Right cardiac atrium (tissue), 5 donors: ENCODE measurements at regions of chr7 and their contacts with region 1.

Region 1: DNA sequence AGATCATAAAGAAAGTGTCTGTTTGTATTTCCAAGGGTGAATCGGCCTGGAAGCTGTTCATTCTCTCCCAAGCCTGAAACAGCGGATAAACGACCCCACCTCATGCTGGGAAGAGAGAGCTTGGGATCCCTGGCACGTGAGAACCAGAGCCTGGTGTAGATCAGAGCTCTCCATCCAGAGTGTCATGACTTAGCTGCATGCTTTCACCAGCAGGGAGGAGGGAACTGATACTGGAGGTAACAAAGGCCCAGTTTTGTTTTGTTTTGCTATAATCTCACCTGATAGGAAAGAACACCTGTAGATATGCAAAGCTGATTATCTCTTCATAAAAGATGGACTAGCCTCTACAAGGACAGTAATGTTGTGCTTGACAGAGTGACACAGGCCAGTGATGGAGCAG is 236.6 kb downstream of the POM121L12 start:
- DNase-seq: no peak
- ATAC-seq: no peak
- H3K4me3 ChIP-seq: no peak overlapping the region
- H3K27ac ChIP-seq: no peak overlapping the region
- H3K4me1 ChIP-seq: no peaks in the 10 kb centered on the region
- H3K27me3 ChIP-seq: no peaks in the 10 kb centered on the region

Region 2: DNA sequence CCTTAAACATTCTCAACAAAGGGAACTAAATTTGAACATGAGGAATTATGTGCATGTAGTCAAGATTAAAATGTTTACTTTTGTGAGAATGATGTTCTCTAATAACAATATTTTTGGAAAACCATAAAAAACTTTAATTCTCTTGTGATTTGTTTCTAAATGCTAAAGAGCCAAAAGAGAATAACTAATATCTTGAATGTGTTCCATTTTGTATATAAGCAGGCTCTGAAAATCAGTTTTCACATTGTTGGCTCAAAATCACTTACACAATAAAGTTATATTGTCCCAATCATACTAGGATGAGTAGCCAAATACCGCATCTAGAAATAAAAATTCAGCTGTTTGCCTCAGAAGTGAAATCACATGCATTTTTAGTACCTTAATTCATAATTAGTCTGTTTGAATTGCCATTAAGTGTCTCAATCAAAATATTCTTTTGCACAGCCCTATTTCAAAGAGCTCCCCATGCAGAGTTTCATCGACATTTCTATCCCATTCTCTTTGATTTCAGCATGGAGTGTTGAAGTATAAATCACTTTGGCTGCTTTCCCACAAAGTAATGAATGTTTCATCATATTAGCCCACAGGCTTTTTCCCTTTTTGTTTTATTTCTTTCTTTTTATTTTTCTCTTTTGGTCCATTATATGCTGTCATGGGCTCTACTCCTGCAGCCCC is 656.9 kb before region 1 on chr7:
- intact Hi-C with region 1: loop called in 1 of 4 experiments (anchors 10 kb)
- DNase-seq: no peak
- ATAC-seq: no peak
- H3K4me3 ChIP-seq: no peak overlapping the region
- H3K27ac ChIP-seq: no peak overlapping the region
- H3K4me1 ChIP-seq: no peaks in the 10 kb centered on the region
- H3K27me3 ChIP-seq: no peaks in the 10 kb centered on the region

Region 3: DNA sequence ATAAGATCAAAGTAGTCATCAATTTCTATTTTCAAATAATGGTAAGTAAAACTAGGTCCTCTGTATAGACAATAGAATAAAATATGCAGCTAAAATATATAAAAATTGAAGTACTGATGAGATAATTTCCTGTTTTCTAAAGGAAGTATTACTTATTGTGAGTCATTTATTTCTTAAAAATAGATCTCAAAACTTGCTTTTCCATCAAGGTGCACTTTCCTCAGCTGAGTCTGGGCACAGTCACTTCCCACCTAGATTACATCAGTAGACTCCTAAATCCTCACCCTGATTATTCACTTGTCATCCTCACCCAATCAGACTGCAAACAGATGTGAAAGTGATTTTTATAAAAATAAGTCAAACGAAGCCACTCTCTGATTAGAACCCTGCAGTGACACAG is 25.1 kb before region 1 on chr7:
- intact Hi-C with region 1: loop called in 1 of 4 experiments (anchors 2 kb)
- DNase-seq: no peak
- ATAC-seq: no peak
- H3K4me3 ChIP-seq: no peak overlapping the region
- H3K27ac ChIP-seq: no peak overlapping the region
- H3K4me1 ChIP-seq: no peaks in the 10 kb centered on the region
- H3K27me3 ChIP-seq: no peaks in the 10 kb centered on the region

Region 4: GRCh38 chr7:53422291-53422690 is 150.2 kb after region 1 on chr7:
- intact Hi-C with region 1: no loop called
- DNase-seq: no peak
- ATAC-seq: no peak
- H3K4me3 ChIP-seq: no peak overlapping the region
- H3K27ac ChIP-seq: no peak overlapping the region
- H3K4me1 ChIP-seq: no peaks in the 10 kb centered on the region
- H3K27me3 ChIP-seq: no peaks in the 10 kb centered on the region

Region 5: GRCh38 chr7:53504914-53505313 is 232.8 kb after region 1 on chr7:
- intact Hi-C with region 1: no loop called
- DNase-seq: no peak
- ATAC-seq: no peak
- H3K4me3 ChIP-seq: no peak overlapping the region
- H3K27ac ChIP-seq: no peak overlapping the region
- H3K4me1 ChIP-seq: no peaks in the 10 kb centered on the region
- H3K27me3 ChIP-seq: no peaks in the 10 kb centered on the region